ENCODE measurements at regions of chr1 and their contacts with region 1.

Region 1: DNA sequence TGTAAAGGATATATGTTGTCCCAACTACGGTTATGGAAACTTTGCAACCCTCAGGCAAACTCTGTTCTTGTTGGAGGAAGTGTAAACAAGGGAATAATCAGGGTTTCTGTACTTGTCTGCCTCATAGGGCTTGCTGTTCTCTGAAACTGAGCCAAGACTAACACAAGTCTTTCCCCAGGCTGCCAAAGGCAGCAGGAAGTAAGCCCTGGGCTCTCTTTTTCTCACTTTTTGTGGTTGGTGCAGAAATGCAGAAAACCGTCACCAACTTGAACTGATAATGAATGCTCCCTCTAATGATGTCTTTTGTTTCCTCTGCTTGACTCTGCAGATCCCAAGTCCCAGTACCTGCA is 7.6 kb downstream of the CYP4X1 start:
- DNase-seq: peak; percentile 82
- H3K4me3 ChIP-seq: no peak overlapping the region
- H3K27ac ChIP-seq: no peak overlapping the region
- H3K4me1 ChIP-seq: peaks cover 33% of the 10 kb centered on the region
- H3K27me3 ChIP-seq: no peaks in the 10 kb centered on the region
- CTCF ChIP-seq: no peak

Region 2: GRCh38 chr1:46996659-46997281 is 34.3 kb before region 1 on chr1:
- CTCF ChIA-PET with region 1: no interaction called
- dilution Hi-C with region 1: loop called (anchors 5 kb)
- in situ Hi-C with region 1: no loop called
- intact Hi-C with region 1: no loop called
- DNase-seq: peak; percentile 32
- H3K4me3 ChIP-seq: no peak overlapping the region
- H3K27ac ChIP-seq: no peak overlapping the region
- H3K4me1 ChIP-seq: no peaks in the 10 kb centered on the region
- H3K27me3 ChIP-seq: no peaks in the 10 kb centered on the region
- CTCF ChIP-seq: no peak